HEK293 (cell line): ENCODE measurements at regions of chr6 and their contacts with region 1.

Region 1: DNA sequence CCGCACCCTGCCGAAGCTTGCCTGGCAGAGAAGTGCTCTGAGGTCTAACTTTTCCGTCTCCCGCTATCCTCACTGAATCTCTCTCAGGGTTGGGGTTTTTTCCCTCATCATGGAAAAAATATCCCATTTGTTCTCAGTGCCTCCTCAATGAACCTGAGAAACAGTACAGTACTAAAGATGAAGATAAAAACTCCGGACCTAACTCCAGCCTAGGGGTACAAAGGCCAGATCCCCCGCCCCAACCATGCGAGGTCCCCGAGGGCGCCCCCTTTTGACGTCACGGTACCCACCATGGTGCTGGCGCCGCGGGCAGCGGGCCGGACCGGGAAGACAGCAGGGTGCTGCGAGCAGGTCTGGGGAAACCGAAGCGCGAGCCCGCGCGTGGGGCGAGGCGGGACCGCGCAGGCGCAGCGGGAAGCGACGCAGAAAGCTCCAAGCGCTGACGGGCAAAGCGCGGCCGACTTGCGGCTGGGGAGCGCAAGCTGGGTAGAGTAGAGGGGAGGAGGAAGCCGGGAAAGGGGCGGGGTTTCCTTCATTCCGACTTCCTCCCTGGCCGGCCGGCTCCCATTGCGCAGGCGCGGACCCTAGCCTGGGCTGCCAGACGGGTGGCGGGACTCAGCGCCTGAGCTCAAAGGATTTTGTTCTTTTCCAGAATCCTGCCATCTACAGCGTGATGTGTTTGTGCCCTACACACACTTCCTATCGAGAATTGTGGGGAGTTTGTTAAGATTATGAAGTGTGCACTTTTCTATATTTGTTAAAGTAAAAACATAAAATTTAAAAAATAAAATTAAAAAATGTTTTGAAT is at the start of gene LSM2:
- H3K4me3 ChIP-seq: peak within 1 kb of the TSS; percentile 91
- H3K27ac ChIP-seq: peak within 1 kb of the TSS; percentile 65
- H3K4me1 ChIP-seq: no peaks in the 10 kb centered on the region
- CTCF ChIP-seq: peak; percentile 96

Region 2: GRCh38 chr6:31702819-31703522 is 103.7 kb before region 1 on chr6 and contains the start of gene ABHD16A:
- CTCF ChIA-PET with region 1: interaction called, 3 read pairs
- POLR2A ChIA-PET with region 1: interaction called, 11 read pairs
- H3K4me3 ChIP-seq: peak within 1 kb of the TSS; percentile 63
- H3K27ac ChIP-seq: peak within 1 kb of the TSS; percentile 62
- H3K4me1 ChIP-seq: no peaks in the 10 kb centered on the region
- CTCF ChIP-seq: 0 out of 2 replicates have a peak, but pooled peaks have one; percentile 9

Region 3: DNA sequence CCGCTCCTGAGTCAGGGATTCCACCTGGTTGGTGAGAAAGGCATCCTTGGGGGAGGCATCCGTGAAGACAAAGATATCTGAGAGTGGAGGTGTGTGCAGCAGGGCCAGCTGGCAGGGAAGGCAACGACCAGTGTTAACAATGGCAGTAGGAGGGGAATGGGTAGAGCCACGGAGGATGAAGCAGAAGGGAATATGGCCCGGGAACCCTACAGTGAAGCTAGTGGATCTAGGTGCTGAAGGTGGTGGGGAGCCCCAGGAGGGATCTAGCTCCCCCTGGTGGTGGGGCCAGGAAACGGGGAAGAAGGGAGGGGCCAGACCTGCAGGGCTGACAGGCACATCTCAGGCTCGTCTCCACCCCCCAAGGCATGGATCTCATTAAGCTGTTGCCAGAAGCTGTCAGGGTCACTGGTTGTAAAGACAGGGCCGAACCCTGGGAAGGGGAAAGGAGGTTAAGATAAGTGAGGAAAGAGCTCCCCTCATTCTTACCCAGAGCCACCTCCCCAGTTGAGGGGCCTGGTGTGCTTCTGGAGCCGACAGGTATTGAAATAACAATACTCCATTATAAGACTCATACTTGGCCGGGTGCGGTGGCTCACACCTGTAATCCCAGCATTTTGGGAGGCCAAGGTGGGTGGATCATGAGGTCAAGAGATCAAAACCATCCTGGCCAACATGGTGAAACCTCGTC is 36.8 kb before region 1 on chr6:
- CTCF ChIA-PET with region 1: interaction called, 11 read pairs
- POLR2A ChIA-PET with region 1: interaction called, 3 read pairs
- H3K4me3 ChIP-seq: no peak overlapping the region
- H3K27ac ChIP-seq: no peak overlapping the region
- H3K4me1 ChIP-seq: no peaks in the 10 kb centered on the region
- CTCF ChIP-seq: peak; percentile 93

Region 4: DNA sequence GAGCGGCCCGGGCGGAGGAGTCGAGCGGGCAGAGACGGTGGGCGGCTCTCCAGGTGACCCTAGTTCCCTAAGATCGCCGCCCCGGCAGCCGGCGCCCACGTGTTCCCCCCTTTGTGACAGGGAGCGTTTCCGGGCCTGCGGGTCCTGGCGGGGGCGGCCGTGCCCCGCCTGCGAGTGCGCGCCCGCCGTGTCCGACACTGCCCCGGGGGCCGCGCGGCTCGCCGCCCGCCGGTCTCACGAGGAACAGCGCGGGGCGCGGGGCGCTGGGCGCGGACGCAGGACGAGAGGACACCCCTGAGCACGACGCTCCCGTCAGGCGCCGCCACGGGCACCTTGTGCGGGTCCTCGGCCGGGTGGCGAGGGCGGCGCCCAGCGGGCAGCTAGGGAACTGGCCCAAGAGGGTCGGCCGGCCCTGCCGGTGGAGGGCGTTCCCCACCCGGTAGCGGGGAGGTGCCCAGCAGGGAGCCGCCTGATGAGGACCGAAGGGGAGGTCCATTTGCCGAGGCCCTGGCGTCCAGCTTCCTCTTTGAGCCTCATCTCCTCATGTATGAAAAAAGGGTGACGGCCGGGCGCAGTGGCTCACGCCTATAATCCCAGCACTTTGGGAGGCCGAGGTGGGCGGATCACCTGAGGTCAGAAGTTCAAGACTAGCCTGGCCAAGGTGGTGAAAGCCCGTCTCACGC is 10.9 kb before region 1 on chr6 and contains the start of gene VARS1:
- CTCF ChIA-PET with region 1: interaction called, 55 read pairs
- POLR2A ChIA-PET with region 1: interaction called, 69 read pairs
- H3K4me3 ChIP-seq: peak within 1 kb of the TSS; percentile 81
- H3K27ac ChIP-seq: peak within 1 kb of the TSS; percentile 93
- H3K4me1 ChIP-seq: no peaks in the 10 kb centered on the region; the same call in 1 of the 2 replicates
- CTCF ChIP-seq: peak; percentile 100

Region 5: GRCh38 chr6:31834434-31835198 is 27.9 kb after region 1 on chr6:
- CTCF ChIA-PET with region 1: interaction called, 5 read pairs
- POLR2A ChIA-PET with region 1: interaction called, 93 read pairs
- H3K4me3 ChIP-seq: peak overlapping the region; percentile 79
- H3K27ac ChIP-seq: peak overlapping the region; percentile 88
- H3K4me1 ChIP-seq: peaks cover 9% of the 10 kb centered on the region
- CTCF ChIP-seq: 0 out of 2 replicates have a peak, but pooled peaks have one; percentile 41

Region 6: DNA sequence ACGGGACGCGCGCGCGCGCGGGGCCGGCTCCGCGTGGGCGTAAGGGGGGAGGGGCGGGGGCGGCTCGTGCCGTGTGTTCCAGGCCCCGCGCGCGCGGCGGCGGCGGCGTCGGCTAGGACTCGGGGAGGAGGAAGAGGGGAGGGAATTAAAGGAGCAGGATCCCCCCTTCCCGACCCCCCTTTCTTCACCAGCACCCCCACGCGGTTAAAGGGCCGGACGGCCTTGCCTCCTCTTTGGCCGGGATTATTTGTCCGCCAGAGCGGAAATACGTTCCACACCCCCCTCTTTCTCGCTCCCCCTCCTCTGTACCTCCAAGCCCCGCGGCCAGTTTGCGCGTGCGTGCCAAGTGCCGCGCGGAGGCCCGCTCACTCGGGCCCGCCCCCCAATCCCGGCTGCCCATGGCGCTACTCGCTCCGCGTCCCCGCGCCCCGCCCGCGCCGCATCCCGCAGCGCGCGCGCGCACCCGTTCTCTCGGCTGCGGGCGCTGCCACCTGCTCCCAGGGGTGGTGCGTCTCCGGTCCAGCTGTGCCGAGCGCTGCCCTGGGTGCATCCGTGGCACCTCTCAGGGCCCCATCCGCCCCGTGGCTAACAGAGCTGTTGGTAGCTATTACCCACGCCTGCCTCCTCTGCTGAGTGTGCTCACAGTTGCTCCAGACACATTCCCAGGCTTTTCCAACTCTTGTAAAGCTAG is 95.4 kb after region 1 on chr6 and contains the start of gene ZBTB12:
- CTCF ChIA-PET with region 1: interaction called, 3 read pairs
- POLR2A ChIA-PET with region 1: interaction called, 10 read pairs
- H3K4me3 ChIP-seq: peak within 1 kb of the TSS; percentile 62
- H3K27ac ChIP-seq: peak within 1 kb of the TSS; percentile 9
- H3K4me1 ChIP-seq: peaks cover 9% of the 10 kb centered on the region
- CTCF ChIP-seq: peak; percentile 57; the same call in 1 of the 2 replicates